ENCODE measurements at regions of chr6 and their contacts with region 1.

Region 1: DNA sequence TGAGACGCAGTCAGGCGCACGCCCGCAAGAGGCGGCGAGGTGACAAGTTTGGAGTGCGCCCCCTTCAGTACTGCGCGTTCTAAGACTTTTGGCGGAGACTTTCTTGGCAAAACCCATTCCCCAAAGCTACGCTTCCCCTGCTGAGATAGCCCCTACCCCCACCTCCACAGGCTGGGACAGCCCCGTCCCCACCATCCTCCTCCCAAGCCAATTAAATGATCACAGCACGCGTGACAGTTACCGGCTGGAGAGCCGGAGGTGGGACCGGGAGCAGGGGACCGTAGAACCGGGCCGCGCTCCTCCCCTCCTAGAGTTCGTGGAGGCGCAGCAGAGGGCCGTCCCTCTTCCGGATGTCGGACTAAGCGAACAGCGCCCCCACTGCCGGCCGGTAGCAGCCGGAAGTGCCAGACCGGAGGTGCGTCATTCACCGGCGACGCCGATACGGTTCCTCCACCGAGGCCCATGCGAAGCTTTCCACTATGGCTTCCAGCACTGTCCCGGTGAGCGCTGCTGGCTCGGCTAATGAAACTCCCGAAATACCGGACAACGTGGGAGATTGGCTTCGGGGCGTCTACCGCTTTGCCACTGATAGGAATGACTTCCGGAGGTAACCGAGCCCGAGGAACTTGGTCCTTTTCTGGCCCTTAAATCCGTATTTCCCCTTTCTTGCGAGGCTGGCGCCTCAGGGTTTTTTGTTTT is at the start of gene TOMM6:
- DNase-seq: peak; percentile 95 to 98 (median 96)
- H3K4me3 ChIP-seq: peak within 1 kb of the TSS; percentile 67
- H3K27ac ChIP-seq: peak within 1 kb of the TSS; percentile 80 to 92
- H3K4me1 ChIP-seq: peaks cover 5% of the 10 kb centered on the region
- H3K27me3 ChIP-seq: no peaks in the 10 kb centered on the region
- CTCF ChIP-seq: peak; percentile 97 to 99 (median 98)
- EP300 ChIP-seq: no peak
- POLR2A ChIP-seq: peak; percentile 85
- total RNA-seq, gene TOMM6: 105 to 167 (median 144) TPM

Region 2: DNA sequence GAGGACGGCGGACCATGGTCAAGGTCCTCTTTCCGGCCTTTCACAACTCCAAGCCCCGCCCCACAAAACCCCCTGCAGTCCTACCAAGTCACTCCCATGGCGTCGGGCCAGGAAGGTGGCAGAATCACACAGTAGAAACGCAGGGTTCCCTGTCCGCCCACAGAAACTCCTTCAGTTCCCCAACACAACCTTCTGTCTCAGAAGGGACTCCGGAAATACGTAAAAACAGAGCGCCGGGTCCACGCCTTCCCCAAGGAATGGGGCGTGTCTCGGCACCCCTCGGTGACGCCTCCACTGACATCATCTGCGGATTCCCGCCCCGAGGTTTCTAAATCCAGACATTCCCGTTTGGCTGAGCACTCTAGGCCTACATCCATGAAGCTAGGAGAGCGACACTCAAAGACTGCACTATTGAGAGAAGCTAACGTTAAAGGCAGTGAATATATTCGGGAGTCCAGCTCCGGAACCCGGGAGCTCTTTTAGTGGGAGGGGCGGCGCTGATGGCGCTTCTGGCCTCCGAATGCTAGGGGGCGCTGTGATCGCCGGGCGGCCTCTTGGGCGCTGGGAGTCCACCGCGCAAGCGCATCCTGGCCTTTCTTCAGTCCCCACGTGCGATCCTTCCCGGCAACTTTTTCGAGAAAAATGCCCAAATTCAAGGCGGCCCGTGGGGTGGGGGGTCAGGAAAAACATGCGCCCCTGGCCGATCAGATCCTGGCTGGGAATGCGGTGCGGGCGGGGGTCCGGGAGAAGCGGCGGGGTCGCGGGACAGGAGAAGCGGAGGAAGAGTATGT is 133.7 kb after region 1 on chr6 and contains the starts of genes BYSL and MED20:
- intact Hi-C with region 1: loop called in 2 of 4 experiments (anchors 5 to 10 kb)
- DNase-seq: peak; percentile 91 to 95 (median 93)
- H3K4me3 ChIP-seq: peak within 1 kb of the TSS; percentile 78
- H3K27ac ChIP-seq: peak within 1 kb of the TSS; percentile 90 to 97
- H3K4me1 ChIP-seq: peaks cover 5% of the 10 kb centered on the region
- H3K27me3 ChIP-seq: no peaks in the 10 kb centered on the region
- CTCF ChIP-seq: peak; percentile 97 to 99 (median 98)
- EP300 ChIP-seq: no peak
- POLR2A ChIP-seq: peak; percentile 76
- total RNA-seq, gene BYSL: 4.8 to 29.2 (median 14.8) TPM
- total RNA-seq, gene MED20: 8.4 to 20.0 (median 13.1) TPM

Region 3: DNA sequence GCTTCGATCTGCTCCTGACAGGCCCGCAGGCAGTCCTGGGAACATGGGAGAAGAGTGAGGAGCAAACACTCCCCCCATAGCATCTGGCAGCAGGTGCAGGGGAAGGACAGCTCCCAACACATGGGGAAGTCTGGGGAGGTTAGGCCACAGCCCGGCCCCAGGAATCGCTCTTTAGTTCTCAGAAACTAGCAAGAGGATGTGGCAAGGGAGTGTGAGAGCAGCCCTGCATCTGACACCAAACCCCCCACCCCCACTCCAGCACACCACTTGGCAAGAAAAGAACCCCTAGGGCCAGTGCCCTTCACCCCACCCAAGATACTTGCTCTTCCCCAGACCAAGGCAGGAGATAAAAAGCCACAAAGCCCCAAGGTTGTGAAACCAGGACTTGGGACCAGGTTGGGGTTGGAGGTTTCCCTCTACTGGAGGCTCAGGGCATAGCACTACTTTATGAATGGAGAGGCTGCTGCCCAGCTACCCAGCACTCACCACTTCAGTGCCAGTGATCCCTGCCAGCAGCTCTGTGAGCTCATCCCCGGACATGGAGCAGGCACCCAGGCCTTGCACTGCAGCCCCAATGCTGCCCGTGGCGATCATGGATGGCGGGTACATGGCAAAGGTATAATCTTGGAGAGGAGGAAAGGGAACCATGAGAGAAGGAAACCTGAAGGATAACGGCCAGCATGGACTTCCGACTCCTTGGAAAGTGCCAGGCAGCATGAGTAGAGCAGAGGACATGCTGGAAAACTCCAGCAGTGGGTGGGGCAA is 148.9 kb after region 1 on chr6:
- intact Hi-C with region 1: loop called in 1 of 4 experiments (anchors 10 kb)
- DNase-seq: peak in 4 of 5 donors; percentile 34 to 62 (median 49)
- H3K4me3 ChIP-seq: no peak overlapping the region
- H3K27ac ChIP-seq: no peak overlapping the region
- H3K4me1 ChIP-seq: peaks cover 10% of the 10 kb centered on the region
- H3K27me3 ChIP-seq: no peaks in the 10 kb centered on the region
- CTCF ChIP-seq: peak; percentile 34 to 56 (median 46)
- EP300 ChIP-seq: no peak
- POLR2A ChIP-seq: no peak

Region 4: DNA sequence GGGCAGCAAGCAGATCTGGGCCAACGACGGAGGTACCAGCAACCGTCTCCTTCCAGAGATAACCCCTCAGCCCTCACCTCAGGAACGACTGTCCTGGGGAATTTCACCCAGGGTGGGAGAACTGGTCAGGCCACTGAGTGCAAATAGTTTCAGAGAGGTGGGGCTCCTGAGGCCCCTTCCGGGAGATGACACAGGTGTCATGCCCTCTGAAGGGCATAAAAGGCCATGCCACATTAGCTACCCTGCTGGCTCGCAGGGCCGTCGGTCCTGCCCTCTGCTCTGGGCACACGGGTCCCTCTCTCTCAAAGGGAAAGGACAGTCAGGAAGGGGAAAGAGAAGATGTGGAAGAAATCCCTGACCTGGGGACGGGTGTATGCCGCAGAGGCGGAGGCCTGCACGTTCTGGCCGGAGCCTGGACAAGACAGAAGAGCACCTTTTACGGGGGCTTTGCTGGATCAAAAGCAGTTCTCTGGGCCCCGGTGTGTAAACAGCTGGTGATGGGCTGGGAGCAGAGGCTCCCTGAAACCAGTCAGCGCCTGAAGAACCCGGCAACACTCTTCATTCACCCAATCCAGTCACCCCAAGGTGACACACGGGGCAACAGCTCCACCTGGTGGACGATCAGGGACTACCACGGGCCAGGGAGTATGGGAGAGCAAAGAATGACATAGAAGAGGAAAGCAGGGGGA is 256.6 kb after region 1 on chr6:
- intact Hi-C with region 1: loop called (anchors 2 to 5 kb)
- DNase-seq: peak; percentile 83 to 93 (median 90)
- H3K4me3 ChIP-seq: no peak overlapping the region
- H3K27ac ChIP-seq: no peak overlapping the region
- H3K4me1 ChIP-seq: peaks cover 2% of the 10 kb centered on the region
- H3K27me3 ChIP-seq: no peaks in the 10 kb centered on the region
- CTCF ChIP-seq: peak; percentile 92
- EP300 ChIP-seq: no peak
- POLR2A ChIP-seq: no peak

Region 5: GRCh38 chr6:42890311-42891198 is 1103.2 kb after region 1 on chr6:
- intact Hi-C with region 1: loop called in 1 of 4 experiments (anchors 5 kb)
- DNase-seq: peak; percentile 88 to 92 (median 92)
- H3K4me3 ChIP-seq: peak overlapping the region; percentile 79
- H3K27ac ChIP-seq: peak overlapping the region; percentile 59 to 79
- H3K4me1 ChIP-seq: no peaks in the 10 kb centered on the region
- H3K27me3 ChIP-seq: no peaks in the 10 kb centered on the region
- CTCF ChIP-seq: no peak
- EP300 ChIP-seq: no peak
- POLR2A ChIP-seq: no peak